Activated naive CD4-positive, alpha-beta T cell treated with anti-CD3 and anti-CD28 coated beads for 36 hours (primary cell): ENCODE measurements at regions of chr10 and their contacts with region 1.

Region 1: GRCh38 chr10:11472158-11472753 is 139.2 kb downstream of the USP6NL start:
- DNase-seq: peak; percentile 85
- H3K4me3 Mint-ChIP-seq: no peak overlapping the region
- H3K27ac Mint-ChIP-seq: no peak overlapping the region
- H3K4me1 Mint-ChIP-seq: no peaks in the 10 kb centered on the region
- H3K27me3 Mint-ChIP-seq: no peaks in the 10 kb centered on the region

Region 2: GRCh38 chr10:10891124-10892082 is 580.9 kb before region 1 on chr10:
- CTCF ChIA-PET with region 1: no interaction called
- intact Hi-C with region 1: loop called (anchors 1 kb)
- DNase-seq: no peak
- H3K4me3 Mint-ChIP-seq: no peak overlapping the region
- H3K27ac Mint-ChIP-seq: no peak overlapping the region
- H3K4me1 Mint-ChIP-seq: no peaks in the 10 kb centered on the region
- H3K27me3 Mint-ChIP-seq: peaks cover 6% of the 10 kb centered on the region

Region 3: GRCh38 chr10:11113156-11113555 is 359.1 kb before region 1 on chr10:
- CTCF ChIA-PET with region 1: interaction called, 3 read pairs
- intact Hi-C with region 1: loop called (anchors 1 kb)
- DNase-seq: peak; percentile 41
- H3K4me3 Mint-ChIP-seq: no peak overlapping the region
- H3K27ac Mint-ChIP-seq: no peak overlapping the region
- H3K4me1 Mint-ChIP-seq: peaks cover 21% of the 10 kb centered on the region
- H3K27me3 Mint-ChIP-seq: no peaks in the 10 kb centered on the region

Region 4: GRCh38 chr10:11345224-11346054 is 126.8 kb before region 1 on chr10:
- CTCF ChIA-PET with region 1: no interaction called
- intact Hi-C with region 1: loop called (anchors 2 kb)
- DNase-seq: peak; percentile 72
- H3K4me3 Mint-ChIP-seq: no peak overlapping the region
- H3K27ac Mint-ChIP-seq: no peak overlapping the region
- H3K4me1 Mint-ChIP-seq: peaks cover 4% of the 10 kb centered on the region
- H3K27me3 Mint-ChIP-seq: no peaks in the 10 kb centered on the region

Region 5: GRCh38 chr10:11411926-11412545 is 60.2 kb before region 1 on chr10:
- CTCF ChIA-PET with region 1: no interaction called
- intact Hi-C with region 1: loop called (anchors 5 kb)
- DNase-seq: no peak
- H3K4me3 Mint-ChIP-seq: no peak overlapping the region
- H3K27ac Mint-ChIP-seq: no peak overlapping the region
- H3K4me1 Mint-ChIP-seq: peaks cover 16% of the 10 kb centered on the region
- H3K27me3 Mint-ChIP-seq: no peaks in the 10 kb centered on the region